Endothelial cell of umbilical vein (primary cell): ENCODE measurements at regions of chr15 and their contacts with region 1.

Region 1: GRCh38 chr15:82165948-82166376 is 96.6 kb downstream of the EFL1 start:
- DNase-seq: peak; percentile 31
- H3K4me3 ChIP-seq: no peak overlapping the region
- H3K27ac ChIP-seq: no peak overlapping the region
- H3K4me1 ChIP-seq: peaks cover 6% of the 10 kb centered on the region
- H3K27me3 ChIP-seq: no peaks in the 10 kb centered on the region
- CTCF ChIP-seq: no peak
- POLR2A ChIP-seq: no peak

Region 2: GRCh38 chr15:82177291-82178010 is 11.5 kb after region 1 on chr15:
- CTCF ChIA-PET with region 1: interaction called, 3 read pairs
- POLR2A ChIA-PET with region 1: no interaction called
- dilution Hi-C with region 1: no loop called
- intact Hi-C with region 1: loop called (anchors 1 kb)
- DNase-seq: no peak
- H3K4me3 ChIP-seq: no peak overlapping the region
- H3K27ac ChIP-seq: no peak overlapping the region
- H3K4me1 ChIP-seq: no peaks in the 10 kb centered on the region
- H3K27me3 ChIP-seq: no peaks in the 10 kb centered on the region
- CTCF ChIP-seq: no peak
- POLR2A ChIP-seq: no peak